T-cell (primary cell): ENCODE measurements at regions of chr3 and their contacts with region 1.

Region 1: GRCh38 chr3:191476066-191476772 is 15.3 kb downstream of the PYDC2 start:
- DNase-seq: no peak
- ATAC-seq: no peak
- H3K4me3 ChIP-seq: no peak overlapping the region
- H3K4me3 Mint-ChIP-seq: no peak overlapping the region
- H3K27ac ChIP-seq: no peak overlapping the region
- H3K27ac Mint-ChIP-seq: no peak overlapping the region
- H3K4me1 ChIP-seq: no peaks in the 10 kb centered on the region
- H3K4me1 Mint-ChIP-seq: no peaks in the 10 kb centered on the region
- H3K27me3 ChIP-seq: no peaks in the 10 kb centered on the region
- H3K27me3 Mint-ChIP-seq: no peaks in the 10 kb centered on the region

Region 2: DNA sequence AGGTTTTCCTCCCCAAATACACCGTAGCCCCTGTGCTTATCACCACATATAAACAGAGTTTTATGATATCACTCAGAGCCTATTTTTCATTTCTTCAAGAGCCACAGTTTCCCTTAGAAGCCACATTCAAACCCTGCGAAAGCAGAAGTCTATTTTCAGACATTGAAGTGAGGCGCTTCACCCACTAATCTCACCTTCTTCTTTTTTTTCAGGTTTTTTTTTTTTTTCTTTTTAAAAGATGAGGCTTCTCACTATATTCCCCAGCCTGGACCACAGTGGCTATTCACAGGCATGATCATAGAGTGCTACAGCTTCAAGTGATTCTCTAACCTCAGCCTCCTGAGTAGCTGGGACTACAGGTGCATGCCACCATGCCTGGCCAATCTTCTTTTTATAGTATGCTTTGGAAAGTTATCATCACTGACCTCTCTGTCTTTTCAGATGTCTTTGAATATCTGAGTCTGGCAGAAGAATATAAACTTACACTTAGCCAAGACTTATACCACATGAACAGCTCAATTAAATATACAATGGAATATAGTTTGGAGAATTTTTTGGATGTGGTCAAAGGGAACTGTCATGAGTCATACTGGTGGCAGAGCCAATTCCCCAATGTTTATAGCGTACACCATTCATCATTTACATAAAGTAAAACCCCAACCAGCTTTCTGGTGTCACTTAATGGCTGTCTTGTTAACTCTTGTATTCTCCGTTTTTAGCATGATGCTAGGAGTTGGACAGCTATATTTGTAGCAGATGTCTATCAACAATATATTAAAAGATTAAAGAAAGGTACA is 206.7 kb before region 1 on chr3:
- CTCF ChIA-PET with region 1: no interaction called
- POLR2A ChIA-PET with region 1: no interaction called
- DNase-seq: no peak
- ATAC-seq: no peak
- H3K4me3 ChIP-seq: no peak overlapping the region
- H3K4me3 Mint-ChIP-seq: no peak overlapping the region
- H3K27ac ChIP-seq: no peak overlapping the region
- H3K27ac Mint-ChIP-seq: no peak overlapping the region
- H3K4me1 ChIP-seq: no peaks in the 10 kb centered on the region
- H3K4me1 Mint-ChIP-seq: no peaks in the 10 kb centered on the region
- H3K27me3 ChIP-seq: no peaks in the 10 kb centered on the region
- H3K27me3 Mint-ChIP-seq: no peaks in the 10 kb centered on the region

Region 3: GRCh38 chr3:191461113-191461595 is 15.1 kb before region 1 on chr3 and contains the start of gene PYDC2:
- CTCF ChIA-PET with region 1: no interaction called
- POLR2A ChIA-PET with region 1: no interaction called
- DNase-seq: no peak
- ATAC-seq: peak in 1 of 4 experiments; percentile 27
- H3K4me3 ChIP-seq: no peak within 1 kb of the TSS
- H3K4me3 Mint-ChIP-seq: no peak within 1 kb of the TSS
- H3K27ac ChIP-seq: no peak within 1 kb of the TSS
- H3K27ac Mint-ChIP-seq: no peak within 1 kb of the TSS
- H3K4me1 ChIP-seq: no peaks in the 10 kb centered on the region
- H3K4me1 Mint-ChIP-seq: no peaks in the 10 kb centered on the region
- H3K27me3 ChIP-seq: no peaks in the 10 kb centered on the region
- H3K27me3 Mint-ChIP-seq: no peaks in the 10 kb centered on the region
- total RNA-seq, gene PYDC2: not detected

Region 4: GRCh38 chr3:191523148-191523547 is 46.9 kb after region 1 on chr3:
- CTCF ChIA-PET with region 1: no interaction called
- POLR2A ChIA-PET with region 1: no interaction called
- DNase-seq: no peak
- ATAC-seq: no peak
- H3K4me3 ChIP-seq: no peak overlapping the region
- H3K4me3 Mint-ChIP-seq: no peak overlapping the region
- H3K27ac ChIP-seq: no peak overlapping the region
- H3K27ac Mint-ChIP-seq: no peak overlapping the region
- H3K4me1 ChIP-seq: no peaks in the 10 kb centered on the region
- H3K4me1 Mint-ChIP-seq: no peaks in the 10 kb centered on the region
- H3K27me3 ChIP-seq: no peaks in the 10 kb centered on the region
- H3K27me3 Mint-ChIP-seq: no peaks in the 10 kb centered on the region

Region 5: GRCh38 chr3:191543897-191544296 is 67.7 kb after region 1 on chr3:
- CTCF ChIA-PET with region 1: no interaction called
- POLR2A ChIA-PET with region 1: interaction called in 1 of 2 experiments, 10 read pairs
- DNase-seq: no peak
- ATAC-seq: no peak
- H3K4me3 ChIP-seq: no peak overlapping the region
- H3K4me3 Mint-ChIP-seq: no peak overlapping the region
- H3K27ac ChIP-seq: no peak overlapping the region
- H3K27ac Mint-ChIP-seq: no peak overlapping the region
- H3K4me1 ChIP-seq: no peaks in the 10 kb centered on the region
- H3K4me1 Mint-ChIP-seq: no peaks in the 10 kb centered on the region
- H3K27me3 ChIP-seq: no peaks in the 10 kb centered on the region
- H3K27me3 Mint-ChIP-seq: no peaks in the 10 kb centered on the region